ENCODE measurements at regions of chr10 and their contacts with region 1.

Region 1: GRCh38 chr10:110918643-110919363 is at the start of gene BBIP1:
- H3K4me3 ChIP-seq: peak within 1 kb of the TSS; percentile 96
- H3K27ac ChIP-seq: peak within 1 kb of the TSS; percentile 88
- H3K4me1 ChIP-seq: peaks cover 30% of the 10 kb centered on the region
- CTCF ChIP-seq: no peak

Region 2: DNA sequence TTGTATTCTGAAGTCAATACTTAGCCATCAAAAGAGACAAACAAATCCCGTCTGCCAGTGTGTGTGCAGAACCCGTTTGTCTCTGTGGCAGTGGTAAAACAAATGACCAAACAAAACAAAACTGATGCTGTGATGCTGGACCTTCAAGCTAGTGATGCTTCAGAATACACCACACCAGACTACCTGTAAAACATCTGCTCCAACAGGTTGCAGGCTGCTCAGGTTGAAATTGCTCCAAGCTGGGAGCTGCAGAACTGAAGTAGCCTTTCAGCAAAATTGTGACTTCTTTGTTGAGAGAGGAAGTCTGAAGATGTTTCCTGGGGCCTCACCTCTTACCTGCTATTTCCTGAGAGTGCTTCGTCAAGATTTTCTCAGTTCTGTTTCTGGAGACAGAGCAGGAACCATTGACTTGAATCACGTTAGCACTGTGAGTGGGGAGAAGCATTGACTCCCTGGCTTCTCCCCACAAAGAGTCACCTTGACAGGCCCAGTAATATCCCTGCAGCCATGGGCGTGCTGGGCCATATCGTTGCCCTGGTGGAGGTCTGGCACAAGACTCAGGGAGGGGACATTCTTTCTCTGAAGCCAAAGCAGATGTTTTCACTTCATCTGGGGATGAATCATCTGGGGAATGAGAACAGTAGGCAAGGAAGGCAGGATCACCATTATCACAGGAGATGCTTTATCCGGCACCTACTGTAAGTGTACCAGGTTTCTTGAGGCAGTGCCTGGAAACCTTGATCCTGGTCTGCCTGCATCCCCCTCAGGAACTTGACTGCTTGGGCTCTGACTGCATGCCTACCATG is 194.5 kb before region 1 on chr10:
- CTCF ChIA-PET with region 1: no interaction called
- POLR2A ChIA-PET with region 1: no interaction called
- H3K4me3 ChIP-seq: no peak overlapping the region
- H3K27ac ChIP-seq: no peak overlapping the region
- H3K4me1 ChIP-seq: 0 out of 2 replicates have a peak, but pooled peaks cover 2% of the 10 kb centered on the region
- CTCF ChIP-seq: no peak

Region 3: DNA sequence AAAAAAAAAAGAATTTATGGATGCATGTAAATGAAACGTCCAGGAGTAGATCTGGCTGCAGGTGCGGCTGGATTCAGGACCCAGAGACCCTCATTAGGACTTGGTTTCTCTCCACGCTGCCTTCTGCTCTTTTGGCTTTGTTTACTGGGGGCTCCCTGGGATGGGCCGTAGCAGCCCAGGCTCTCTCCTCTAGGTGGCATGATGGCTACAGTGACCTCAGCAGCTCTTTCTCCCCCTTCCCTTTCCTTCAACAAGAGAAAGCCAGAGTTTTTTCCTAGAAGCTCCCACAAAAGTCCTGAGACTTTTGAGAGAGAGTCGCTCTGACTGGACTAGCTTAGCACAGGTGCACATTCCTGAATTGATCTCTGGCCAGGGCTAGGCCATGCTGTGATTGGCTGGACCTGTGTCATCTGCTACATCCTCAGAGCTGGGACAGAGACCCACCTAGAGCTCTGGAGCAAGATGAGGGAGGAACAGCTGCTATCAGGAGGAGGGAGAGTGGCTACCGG is 114.9 kb before region 1 on chr10:
- CTCF ChIA-PET with region 1: interaction called, 3 read pairs
- POLR2A ChIA-PET with region 1: interaction called, 15 read pairs
- H3K4me3 ChIP-seq: no peak overlapping the region
- H3K27ac ChIP-seq: no peak overlapping the region
- H3K4me1 ChIP-seq: peaks cover 12% of the 10 kb centered on the region
- CTCF ChIP-seq: peak; percentile 58; the same call in 1 of the 2 replicates

Region 4: GRCh38 chr10:110977662-110978061 is 58.9 kb after region 1 on chr10:
- CTCF ChIA-PET with region 1: no interaction called
- POLR2A ChIA-PET with region 1: no interaction called
- H3K4me3 ChIP-seq: no peak overlapping the region
- H3K27ac ChIP-seq: no peak overlapping the region
- H3K4me1 ChIP-seq: 0 out of 2 replicates have a peak, but pooled peaks cover 3% of the 10 kb centered on the region
- CTCF ChIP-seq: no peak

Measured in HEK293 (cell line).